ENCODE measurements at regions of chr11 and their contacts with region 1.

Region 1: GRCh38 chr11:82692981-82693380 is 40.7 kb downstream of the FAM181B start:
- DNase-seq: no peak
- H3K4me3 ChIP-seq: no peak overlapping the region
- H3K27ac ChIP-seq: no peak overlapping the region
- H3K4me1 ChIP-seq: no peaks in the 10 kb centered on the region
- H3K27me3 ChIP-seq: no peaks in the 10 kb centered on the region; the same call in 1 of the 2 replicates
- CTCF ChIP-seq: no peak
- EP300 ChIP-seq: no peak
- RAD21 ChIP-seq: no peak

Region 2: DNA sequence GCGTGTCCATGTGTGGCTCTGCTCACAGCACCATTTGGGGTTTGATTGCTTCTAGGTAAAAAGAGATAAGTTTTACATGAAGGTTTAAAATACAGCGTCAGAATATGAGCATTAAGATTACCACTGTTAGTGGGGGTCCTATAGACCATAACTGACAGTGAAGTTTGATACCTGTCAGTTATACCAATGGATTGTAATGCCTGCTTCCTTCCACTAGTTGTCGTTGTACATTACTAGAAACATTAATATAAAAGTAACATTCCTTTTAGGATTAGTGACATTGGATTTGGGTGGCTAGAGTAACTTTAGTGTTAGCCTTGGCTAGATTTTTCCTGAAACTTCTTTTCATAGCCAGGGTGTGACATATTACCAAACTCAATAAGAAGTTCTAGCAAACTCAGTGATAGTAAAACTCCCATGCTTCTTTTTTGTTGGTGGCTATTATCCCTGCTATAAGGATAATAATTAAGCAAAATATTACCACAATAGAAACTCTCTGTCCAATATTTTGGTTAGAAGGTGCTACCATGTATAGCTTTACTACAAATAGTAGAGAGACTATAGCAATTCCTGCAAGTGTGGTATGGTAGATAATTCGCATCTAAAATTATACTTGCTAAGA is 16.4 kb before region 1 on chr11:
- CTCF ChIA-PET with region 1: interaction called, 63 read pairs
- POLR2A ChIA-PET with region 1: no interaction called
- DNase-seq: no peak
- H3K4me3 ChIP-seq: no peak overlapping the region
- H3K27ac ChIP-seq: no peak overlapping the region
- H3K4me1 ChIP-seq: no peaks in the 10 kb centered on the region
- H3K27me3 ChIP-seq: no peaks in the 10 kb centered on the region
- CTCF ChIP-seq: peak; percentile 69
- EP300 ChIP-seq: no peak
- RAD21 ChIP-seq: no peak

Region 3: DNA sequence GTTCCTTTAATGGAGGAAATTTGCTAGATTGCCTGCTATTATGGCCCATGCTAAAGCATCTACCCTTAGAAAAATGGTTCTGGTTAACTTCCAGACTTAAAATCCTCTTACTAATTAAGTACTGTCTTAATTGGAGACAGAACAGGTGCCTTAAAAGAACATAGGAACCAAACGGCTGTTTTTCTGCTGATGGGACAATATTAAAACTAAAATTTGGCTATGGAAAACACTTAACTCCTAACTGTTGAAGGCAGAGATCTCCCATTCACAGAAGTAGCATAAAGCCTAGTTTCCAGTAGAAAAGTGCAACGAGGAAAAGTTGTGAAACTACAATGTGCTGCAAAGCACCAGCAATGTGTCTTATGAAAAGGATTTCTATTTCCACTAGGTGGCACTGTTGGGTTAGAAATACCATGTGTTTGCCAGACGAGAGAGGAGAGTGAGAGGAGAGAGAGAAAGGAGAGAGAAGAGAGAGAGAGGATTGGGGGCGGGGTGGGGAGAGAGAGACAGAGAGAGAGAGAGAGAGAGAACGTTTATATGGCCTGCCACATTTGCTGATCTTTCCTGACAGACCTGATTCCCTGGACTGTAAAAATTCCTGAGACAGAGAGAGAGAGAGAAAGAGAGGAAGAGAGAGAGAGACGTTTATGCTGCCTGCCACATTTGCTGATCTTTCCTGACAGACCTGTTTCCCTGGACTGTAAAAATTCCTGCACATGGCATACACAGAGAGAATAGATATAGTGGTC is 10.8 kb before region 1 on chr11:
- CTCF ChIA-PET with region 1: interaction called, 63 read pairs
- POLR2A ChIA-PET with region 1: no interaction called
- DNase-seq: peak; percentile 36
- H3K4me3 ChIP-seq: no peak overlapping the region; a peak in 1 of 4 replicates
- H3K27ac ChIP-seq: no peak overlapping the region
- H3K4me1 ChIP-seq: no peaks in the 10 kb centered on the region
- H3K27me3 ChIP-seq: no peaks in the 10 kb centered on the region; the same call in 1 of the 2 replicates
- CTCF ChIP-seq: peak; percentile 65
- EP300 ChIP-seq: no peak
- RAD21 ChIP-seq: peak; percentile 83

Measured in SK-N-SH (cell line).